Naive thymus-derived CD4-positive, alpha-beta T cell (primary cell): ENCODE measurements at regions of chr2 and their contacts with region 1.

Region 1: GRCh38 chr2:233267516-233268245 is 16.2 kb downstream of the ATG16L1 start:
- DNase-seq: peak; percentile 49 to 95 (median 91)
- ATAC-seq: peak; percentile 97
- H3K4me3 ChIP-seq: peak overlapping the region; percentile 40
- H3K4me3 Mint-ChIP-seq: peak overlapping the region; percentile 38 to 84 (median 76)
- H3K27ac ChIP-seq: peak overlapping the region; percentile 79
- H3K27ac Mint-ChIP-seq: peak overlapping the region; percentile 95 to 100 (median 99)
- H3K4me1 ChIP-seq: peaks cover 57 to 62% of the 10 kb centered on the region in 2 donors
- H3K4me1 Mint-ChIP-seq: peaks cover 39 to 81% (median 75%) of the 10 kb centered on the region in 7 donors
- H3K27me3 ChIP-seq: no peaks in the 10 kb centered on the region
- H3K27me3 Mint-ChIP-seq: no peaks in the 10 kb centered on the region

Region 2: GRCh38 chr2:231780909-231781797 is 1486.5 kb before region 1 on chr2 and contains the start of gene PDE6D:
- CTCF ChIA-PET with region 1: no interaction called
- POLR2A ChIA-PET with region 1: no interaction called
- intact Hi-C with region 1: loop called in 1 of 2 experiments (anchors 2 kb)
- DNase-seq: peak; percentile 90 to 98 (median 94)
- ATAC-seq: peak; percentile 94
- H3K4me3 ChIP-seq: peak within 1 kb of the TSS; percentile 100
- H3K4me3 Mint-ChIP-seq: peak within 1 kb of the TSS; percentile 85 to 99 (median 98)
- H3K27ac ChIP-seq: peak within 1 kb of the TSS; percentile 82
- H3K27ac Mint-ChIP-seq: peak within 1 kb of the TSS; percentile 90 to 98 (median 94)
- H3K4me1 ChIP-seq: peaks cover 26 to 30% of the 10 kb centered on the region in 2 donors
- H3K4me1 Mint-ChIP-seq: peaks cover 45 to 76% (median 57%) of the 10 kb centered on the region in 7 donors
- H3K27me3 ChIP-seq: no peaks in the 10 kb centered on the region
- H3K27me3 Mint-ChIP-seq: peaks cover 0 to 5% (median 0%) of the 10 kb centered on the region in 5 donors
- total RNA-seq, gene PDE6D: 14.3 to 35.7 (median 25.2) TPM

Region 3: DNA sequence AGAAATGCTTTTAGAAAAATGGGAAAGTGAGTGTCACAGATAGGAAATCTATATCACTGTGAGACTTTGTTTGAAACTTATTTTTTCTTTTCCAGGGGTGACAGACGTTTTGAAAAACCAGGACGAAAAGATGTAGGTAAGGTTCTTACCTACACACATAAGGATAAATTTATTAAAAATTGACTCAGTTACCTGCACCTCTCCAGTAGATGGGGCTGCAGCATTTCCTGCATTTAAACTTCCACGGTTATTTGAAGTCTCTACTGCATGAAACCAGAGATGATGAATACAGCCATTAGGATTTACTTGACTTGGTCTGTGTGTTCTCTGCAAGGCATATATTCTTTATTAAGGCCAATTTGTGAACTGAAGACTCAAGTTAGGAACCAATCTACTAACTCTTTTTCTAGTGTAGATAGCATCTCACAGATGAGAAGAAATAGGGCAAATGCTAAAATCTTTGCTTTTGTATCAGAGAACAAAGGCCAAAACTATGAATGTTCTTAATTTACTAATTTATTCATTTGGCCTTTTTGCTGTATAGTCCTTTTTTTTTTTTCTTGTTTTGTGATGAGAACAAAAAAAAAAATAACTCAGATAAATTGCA is 506.3 kb before region 1 on chr2:
- CTCF ChIA-PET with region 1: no interaction called
- POLR2A ChIA-PET with region 1: no interaction called
- intact Hi-C with region 1: loop called in 1 of 2 experiments (anchors 5 kb)
- DNase-seq: peak in 7 of 9 donors; percentile 11 to 53 (median 36)
- ATAC-seq: peak; percentile 66
- H3K4me3 ChIP-seq: no peak overlapping the region
- H3K4me3 Mint-ChIP-seq: no peak overlapping the region
- H3K27ac ChIP-seq: no peak overlapping the region
- H3K27ac Mint-ChIP-seq: no peak overlapping the region
- H3K4me1 ChIP-seq: peaks cover 0 to 11% of the 10 kb centered on the region in 2 donors
- H3K4me1 Mint-ChIP-seq: peaks cover 5 to 32% (median 17%) of the 10 kb centered on the region in 7 donors
- H3K27me3 ChIP-seq: no peaks in the 10 kb centered on the region
- H3K27me3 Mint-ChIP-seq: no peaks in the 10 kb centered on the region

Region 4: GRCh38 chr2:233209533-233210171 is 58.0 kb before region 1 on chr2:
- CTCF ChIA-PET with region 1: no interaction called
- POLR2A ChIA-PET with region 1: no interaction called
- intact Hi-C with region 1: no loop called
- DNase-seq: no peak
- ATAC-seq: peak; percentile 19
- H3K4me3 ChIP-seq: no peak overlapping the region
- H3K4me3 Mint-ChIP-seq: no peak overlapping the region
- H3K27ac ChIP-seq: no peak overlapping the region
- H3K27ac Mint-ChIP-seq: peak overlapping the region; percentile 9 to 95 (median 50)
- H3K4me1 ChIP-seq: no peaks in the 10 kb centered on the region
- H3K4me1 Mint-ChIP-seq: peaks cover 5 to 22% (median 10%) of the 10 kb centered on the region in 7 donors
- H3K27me3 ChIP-seq: no peaks in the 10 kb centered on the region
- H3K27me3 Mint-ChIP-seq: no peaks in the 10 kb centered on the region

Region 5: GRCh38 chr2:233280114-233280693 is 12.5 kb after region 1 on chr2:
- CTCF ChIA-PET with region 1: interaction called, 3 read pairs
- POLR2A ChIA-PET with region 1: interaction called, 29 read pairs
- intact Hi-C with region 1: loop called in 1 of 2 experiments (anchors 1 kb)
- DNase-seq: no peak
- ATAC-seq: no peak
- H3K4me3 ChIP-seq: no peak overlapping the region
- H3K4me3 Mint-ChIP-seq: no peak overlapping the region
- H3K27ac ChIP-seq: no peak overlapping the region
- H3K27ac Mint-ChIP-seq: peak overlapping the region in 8 of 9 donors; percentile 20 to 76 (median 70)
- H3K4me1 ChIP-seq: peaks cover 11 to 15% of the 10 kb centered on the region in 2 donors
- H3K4me1 Mint-ChIP-seq: peaks cover 9 to 45% (median 34%) of the 10 kb centered on the region in 7 donors
- H3K27me3 ChIP-seq: no peaks in the 10 kb centered on the region
- H3K27me3 Mint-ChIP-seq: no peaks in the 10 kb centered on the region

Region 6: GRCh38 chr2:233404222-233404621 is 136.5 kb after region 1 on chr2:
- CTCF ChIA-PET with region 1: interaction called, 4 read pairs
- POLR2A ChIA-PET with region 1: interaction called, 4 read pairs
- intact Hi-C with region 1: loop called in 1 of 2 experiments (anchors 5 kb)
- DNase-seq: peak in 7 of 9 donors; percentile 66 to 82 (median 75)
- ATAC-seq: peak; percentile 77
- H3K4me3 ChIP-seq: no peak overlapping the region
- H3K4me3 Mint-ChIP-seq: peak overlapping the region in 7 of 10 donors; percentile 6 to 52 (median 22)
- H3K27ac ChIP-seq: peak overlapping the region; percentile 27
- H3K27ac Mint-ChIP-seq: peak overlapping the region; percentile 48 to 96 (median 83)
- H3K4me1 ChIP-seq: peaks cover 31 to 61% of the 10 kb centered on the region in 2 donors
- H3K4me1 Mint-ChIP-seq: peaks cover 52 to 91% (median 83%) of the 10 kb centered on the region in 7 donors
- H3K27me3 ChIP-seq: no peaks in the 10 kb centered on the region
- H3K27me3 Mint-ChIP-seq: no peaks in the 10 kb centered on the region